Left cardiac atrium (tissue), 4 donors: ENCODE measurements at regions of chr3 and their contacts with region 1.

Region 1: GRCh38 chr3:44648564-44649229 is at the start of gene ZNF35:
- DNase-seq: peak; percentile 88
- ATAC-seq: peak; percentile 97 to 98
- total RNA-seq, gene ZNF35: 4.9 to 13.5 TPM

Region 2: DNA sequence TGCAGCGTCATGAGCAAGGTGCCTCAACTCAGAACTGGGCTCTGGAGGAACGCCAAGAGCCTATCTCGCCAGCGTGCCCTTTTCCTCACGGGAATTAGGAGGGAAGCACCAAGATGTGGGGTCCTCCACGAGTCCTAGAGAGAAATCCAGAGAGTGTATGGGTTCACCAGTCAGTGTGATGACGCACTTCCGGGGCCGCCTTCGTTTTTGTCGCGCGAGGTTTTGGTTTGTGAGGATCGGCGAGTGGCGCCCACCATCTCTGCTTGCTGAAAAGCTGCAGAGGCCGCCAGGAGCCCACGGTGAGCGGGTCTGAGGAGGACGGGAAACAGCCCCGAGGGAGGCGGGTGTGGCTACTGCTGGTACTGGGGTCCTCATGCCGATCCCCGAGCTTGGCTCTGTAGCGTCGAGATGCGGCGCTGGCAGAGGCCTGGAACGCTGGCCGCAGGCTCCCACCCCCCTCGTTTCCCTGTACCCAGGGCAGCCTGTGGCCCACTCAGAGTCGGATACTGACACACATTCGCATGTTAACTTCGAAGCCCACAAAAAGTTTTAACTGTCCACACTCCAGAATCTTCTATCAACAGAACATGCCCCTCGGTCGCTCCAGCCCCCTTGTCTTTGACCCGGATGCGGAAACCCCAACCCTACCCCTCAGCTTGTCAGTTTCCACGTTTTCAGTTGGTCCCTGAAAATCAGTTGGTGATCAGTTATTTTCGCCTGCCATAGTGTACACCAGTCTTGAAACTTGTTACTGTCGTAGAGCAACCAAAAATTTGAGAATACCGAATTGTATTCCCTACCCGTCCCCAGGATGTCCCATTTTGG is 1712.3 kb before region 1 on chr3:
- intact Hi-C with region 1: no loop called
- DNase-seq: peak; percentile 47
- ATAC-seq: peak in 1 of 2 donors; percentile 70

Region 3: DNA sequence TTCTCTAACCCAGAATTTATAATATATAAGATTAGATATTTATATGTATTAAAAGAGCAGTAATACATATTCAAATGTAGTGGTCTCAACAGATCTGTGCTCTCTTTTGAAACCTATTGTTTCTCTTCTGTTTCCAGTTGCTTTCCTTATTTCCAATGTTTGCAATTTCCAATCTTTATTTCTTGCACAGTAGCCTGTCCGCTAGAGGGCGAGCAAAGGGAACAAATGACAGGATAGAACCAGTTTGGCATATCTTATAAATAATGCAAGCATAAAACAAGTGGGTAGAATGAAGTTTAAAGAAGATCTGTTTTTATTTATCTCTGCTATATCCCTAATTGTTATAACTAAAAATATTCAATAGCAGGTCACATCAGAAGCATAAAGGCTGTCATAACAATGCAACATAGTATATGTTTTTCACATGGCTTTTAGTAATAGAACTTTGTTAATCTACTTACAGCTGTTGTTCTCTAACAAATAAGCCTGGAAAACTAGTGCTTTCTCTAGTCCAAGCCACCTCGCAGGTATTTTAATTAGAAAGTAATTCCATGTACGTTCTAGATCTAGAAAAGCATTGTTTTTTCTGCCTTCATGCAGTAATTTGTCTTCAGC is 325.2 kb before region 1 on chr3:
- intact Hi-C with region 1: loop called in 1 of 2 experiments (anchors 10 kb)
- DNase-seq: peak; percentile 76
- ATAC-seq: peak in 1 of 2 donors; percentile 31